ENCODE measurements at regions of chr11 and their contacts with region 1.

Region 1: GRCh38 chr11:76686261-76687079 is 15.9 kb upstream of the LRRC32 start:
- DNase-seq: no peak
- ATAC-seq: peak; percentile 70
- H3K4me3 Mint-ChIP-seq: peak overlapping the region; percentile 62
- H3K27ac Mint-ChIP-seq: peak overlapping the region; percentile 84
- H3K4me1 Mint-ChIP-seq: peaks cover 26% of the 10 kb centered on the region
- H3K27me3 Mint-ChIP-seq: peaks cover 4% of the 10 kb centered on the region

Region 2: GRCh38 chr11:76672431-76673175 is 13.9 kb before region 1 on chr11:
- CTCF ChIA-PET with region 1: interaction called, 11 read pairs
- POLR2A ChIA-PET with region 1: interaction called, 3 read pairs
- DNase-seq: peak; percentile 54
- ATAC-seq: peak; percentile 49
- H3K4me3 Mint-ChIP-seq: peak overlapping the region; percentile 9
- H3K27ac Mint-ChIP-seq: peak overlapping the region; percentile 85
- H3K4me1 Mint-ChIP-seq: peaks cover 53% of the 10 kb centered on the region
- H3K27me3 Mint-ChIP-seq: peaks cover 27% of the 10 kb centered on the region

Region 3: DNA sequence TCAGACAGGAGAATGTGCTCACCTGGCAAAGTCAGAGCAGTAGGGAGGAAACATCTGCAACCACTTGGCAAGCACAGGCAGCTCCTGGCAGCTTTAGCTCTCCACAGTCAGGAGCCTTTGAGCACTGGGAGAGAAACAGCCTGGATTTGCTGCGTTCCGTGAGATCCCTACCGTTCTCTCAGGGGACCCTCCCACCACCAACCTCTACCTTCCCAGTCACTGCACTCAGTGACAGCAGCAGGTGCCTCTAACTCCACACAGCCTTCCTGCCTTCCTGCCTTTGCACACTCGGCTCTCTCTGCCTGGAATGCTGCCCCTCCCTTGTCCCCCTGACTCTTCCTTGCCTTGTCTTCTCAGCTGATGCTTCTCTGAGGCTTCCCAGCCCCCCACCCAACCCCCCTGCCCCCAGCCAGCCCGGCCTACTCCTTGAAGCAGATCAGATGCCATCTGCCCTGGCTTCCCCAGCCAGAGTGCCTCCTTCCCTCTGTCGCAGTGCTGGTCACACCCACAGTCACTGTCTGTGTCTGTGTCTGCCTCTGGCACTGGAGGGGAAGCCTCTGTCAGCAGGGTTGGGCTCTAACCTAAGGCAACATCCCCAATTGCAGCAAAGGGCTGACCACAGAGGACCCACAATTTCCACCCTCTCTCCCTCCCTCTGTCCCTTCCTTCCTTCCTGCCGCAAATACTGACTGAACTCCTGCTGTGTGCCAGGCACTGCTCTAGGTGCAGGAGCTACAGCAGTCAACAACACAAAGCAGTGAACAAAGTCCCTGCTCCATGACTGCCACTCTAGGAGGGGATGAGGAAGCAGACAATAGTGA is 81.8 kb after region 1 on chr11:
- CTCF ChIA-PET with region 1: no interaction called
- POLR2A ChIA-PET with region 1: no interaction called
- DNase-seq: peak; percentile 75
- ATAC-seq: peak; percentile 90
- H3K4me3 Mint-ChIP-seq: peak overlapping the region; percentile 59
- H3K27ac Mint-ChIP-seq: peak overlapping the region; percentile 95
- H3K4me1 Mint-ChIP-seq: peaks cover 64% of the 10 kb centered on the region
- H3K27me3 Mint-ChIP-seq: peaks cover 7% of the 10 kb centered on the region

Region 4: GRCh38 chr11:76782526-76783293 is 96.2 kb after region 1 on chr11:
- CTCF ChIA-PET with region 1: no interaction called
- POLR2A ChIA-PET with region 1: no interaction called
- DNase-seq: peak; percentile 83
- ATAC-seq: peak; percentile 81
- H3K4me3 Mint-ChIP-seq: peak overlapping the region; percentile 94
- H3K27ac Mint-ChIP-seq: peak overlapping the region; percentile 93
- H3K4me1 Mint-ChIP-seq: peaks cover 24% of the 10 kb centered on the region
- H3K27me3 Mint-ChIP-seq: peaks cover 54% of the 10 kb centered on the region

Measured in activated CD8-positive, alpha-beta T cell treated with anti-CD3 and anti-CD28 coated beads, Interleukin-2, amount 10 ng/mL, durations not matched to agents 7 days and 5 days (primary cell).